ENCODE measurements at regions of chr6 and their contacts with region 1.

Region 1: GRCh38 chr6:147331401-147331800 is 127.2 kb downstream of the STXBP5 start:
- DNase-seq: no peak
- H3K4me3 Mint-ChIP-seq: no peak overlapping the region
- H3K27ac Mint-ChIP-seq: no peak overlapping the region
- H3K4me1 Mint-ChIP-seq: no peaks in the 10 kb centered on the region
- H3K27me3 Mint-ChIP-seq: no peaks in the 10 kb centered on the region

Region 2: GRCh38 chr6:146985111-146985510 is 346.3 kb before region 1 on chr6:
- intact Hi-C with region 1: no loop called
- DNase-seq: no peak
- H3K4me3 Mint-ChIP-seq: no peak overlapping the region
- H3K27ac Mint-ChIP-seq: no peak overlapping the region
- H3K4me1 Mint-ChIP-seq: no peaks in the 10 kb centered on the region
- H3K27me3 Mint-ChIP-seq: no peaks in the 10 kb centered on the region

Region 3: GRCh38 chr6:147341486-147341885 is 10.1 kb after region 1 on chr6:
- intact Hi-C with region 1: loop called (anchors 1 kb)
- DNase-seq: no peak
- H3K4me3 Mint-ChIP-seq: no peak overlapping the region
- H3K27ac Mint-ChIP-seq: no peak overlapping the region
- H3K4me1 Mint-ChIP-seq: peaks cover 5% of the 10 kb centered on the region
- H3K27me3 Mint-ChIP-seq: no peaks in the 10 kb centered on the region

Measured in activated T-helper 1 cell treated with anti-CD3 and anti-CD28 coated beads, Interleukin-12 subunit alpha, Interleukin-12 subunit beta, Interleukin-2, Interleukin-4 antibody, amounts not matched to agents 30 ng/mL and 10 ng/mL and 1 ng/mL, durations not matched to agents 14 hours and 24 hours and 36 hours (primary cell).